Left ventricle myocardium superior (tissue), 1 donor: ENCODE measurements at regions of chr17 and their contacts with region 1.

Region 1: GRCh38 chr17:57859601-57860396 is 10.0 kb upstream of the MRPS23 start:
- DNase-seq: no peak
- ATAC-seq: no peak

Region 2: GRCh38 chr17:57714665-57715180 is 145.1 kb before region 1 on chr17:
- intact Hi-C with region 1: no loop called
- DNase-seq: peak; percentile 41
- ATAC-seq: peak; percentile 27

Region 3: DNA sequence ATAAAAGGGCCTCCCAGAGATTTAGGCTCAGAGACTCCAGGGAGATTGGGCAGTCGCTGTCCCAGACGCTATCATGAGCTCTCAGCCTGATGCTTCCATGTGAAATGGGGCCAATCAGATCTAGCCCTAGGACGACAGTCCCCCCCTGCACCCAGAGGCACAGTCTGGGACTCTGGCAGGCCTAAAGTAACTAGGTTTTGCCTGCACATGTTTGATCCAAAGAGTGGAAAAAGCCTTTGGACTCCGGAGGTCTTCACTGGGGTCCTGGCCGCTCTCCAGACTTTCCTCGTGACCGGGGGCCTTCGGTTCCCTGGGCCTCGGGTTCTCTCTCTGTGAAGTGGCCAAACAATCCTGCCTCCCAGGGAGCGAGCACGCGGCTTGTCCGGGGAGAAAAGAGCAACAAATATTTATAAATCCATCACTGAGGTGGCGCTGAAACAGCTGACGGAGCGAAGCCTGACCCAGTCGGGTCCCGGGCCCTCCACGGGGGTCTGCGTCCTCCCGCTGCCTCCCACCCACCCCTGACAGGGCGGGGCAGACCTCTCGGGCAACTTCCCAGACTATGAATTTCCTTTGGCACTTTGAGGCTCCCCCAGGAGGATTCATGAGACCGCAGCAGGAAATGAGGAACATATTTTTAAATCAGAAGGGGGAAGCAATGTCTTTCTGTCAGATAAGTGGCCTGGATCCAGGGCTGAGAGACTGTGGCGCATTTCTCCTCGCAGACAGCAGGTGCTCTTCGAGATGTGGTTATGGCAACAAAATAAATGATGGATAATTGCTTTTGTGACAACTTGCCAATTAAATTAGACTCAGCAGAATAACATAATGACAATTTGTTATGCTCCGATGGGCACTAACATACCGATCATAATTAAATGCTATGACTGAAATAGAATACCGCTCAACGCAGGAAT is 48.8 kb before region 1 on chr17:
- intact Hi-C with region 1: no loop called
- DNase-seq: peak; percentile 69
- ATAC-seq: peak; percentile 85

Region 4: DNA sequence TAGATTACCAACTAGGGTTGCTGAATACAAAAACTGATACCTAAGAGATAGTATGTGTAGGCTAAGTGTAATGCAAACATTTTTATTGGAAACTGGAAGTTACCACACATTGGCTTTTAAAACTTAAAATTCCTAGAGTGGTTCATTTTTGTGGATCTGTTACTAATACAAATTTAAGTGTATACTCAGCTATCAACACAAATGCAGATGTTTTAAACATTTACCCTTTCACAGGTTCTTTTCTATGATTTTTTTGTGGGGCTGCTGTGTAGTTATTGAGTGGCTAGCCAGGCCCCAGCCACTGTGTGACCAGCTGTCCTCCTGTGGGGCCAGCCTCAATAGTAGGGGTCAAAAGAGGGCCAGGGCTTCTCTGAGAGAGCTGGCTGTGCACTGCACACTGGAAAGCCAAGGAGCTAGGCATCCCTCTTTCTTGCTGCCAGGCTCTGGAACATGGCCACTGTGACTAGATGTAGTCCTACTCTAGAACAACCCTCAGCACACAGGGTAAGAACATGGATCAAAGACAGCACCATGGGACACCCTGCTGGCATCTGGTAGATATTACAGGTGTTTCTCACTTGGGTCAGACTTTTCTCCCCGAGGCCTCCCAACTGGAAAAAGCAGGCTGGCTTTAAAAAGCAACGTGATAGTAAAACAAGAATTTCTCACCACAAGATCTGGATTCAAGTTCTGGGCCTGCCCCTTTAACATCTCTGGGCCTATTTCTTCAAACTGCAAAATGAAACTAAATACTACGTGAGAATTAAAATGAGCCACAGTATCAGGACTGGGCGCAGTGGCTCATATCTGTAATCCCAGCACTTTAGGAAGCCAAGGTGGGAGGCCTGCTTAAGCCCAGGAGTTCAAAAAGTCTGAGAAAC is 135.5 kb after region 1 on chr17:
- intact Hi-C with region 1: loop called (anchors 2 kb)
- DNase-seq: peak; percentile 58
- ATAC-seq: peak; percentile 90